Activated B cell treated with CpG ODN at 0.5 μM for 24 hours (primary cell): ENCODE measurements at regions of chr15 and their contacts with region 1.

Region 1: GRCh38 chr15:25508369-25509002 is 69.7 kb upstream of the UBE3A start:
- DNase-seq: no peak
- ATAC-seq: no peak
- H3K4me3 Mint-ChIP-seq: no peak overlapping the region
- H3K27ac Mint-ChIP-seq: no peak overlapping the region
- H3K4me1 Mint-ChIP-seq: no peaks in the 10 kb centered on the region
- H3K27me3 Mint-ChIP-seq: no peaks in the 10 kb centered on the region
- CTCF ChIP-seq: no peak

Region 2: DNA sequence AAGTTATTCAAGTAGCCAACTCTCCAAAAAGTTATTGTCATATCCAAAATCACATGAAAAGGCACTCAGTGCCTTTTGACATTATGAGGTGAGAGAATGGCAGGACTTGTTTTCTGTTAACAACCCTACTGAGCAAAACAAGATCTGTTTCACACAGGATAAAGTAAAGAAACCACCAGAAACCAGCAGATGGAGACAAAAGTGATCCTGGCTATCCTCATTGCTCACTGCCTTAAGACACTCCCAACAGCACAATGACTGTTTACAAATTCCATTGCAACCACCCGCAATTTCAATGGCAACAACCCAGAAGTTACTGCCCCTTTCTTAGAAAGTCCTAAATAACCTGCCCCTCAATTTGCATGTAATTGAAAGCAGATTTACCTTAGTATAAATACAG is 1468.8 kb before region 1 on chr15:
- CTCF ChIA-PET with region 1: no interaction called
- POLR2A ChIA-PET with region 1: no interaction called
- intact Hi-C with region 1: loop called (anchors 10 kb)
- DNase-seq: no peak
- ATAC-seq: no peak
- H3K4me3 Mint-ChIP-seq: no peak overlapping the region
- H3K27ac Mint-ChIP-seq: no peak overlapping the region
- H3K4me1 Mint-ChIP-seq: no peaks in the 10 kb centered on the region
- H3K27me3 Mint-ChIP-seq: no peaks in the 10 kb centered on the region
- CTCF ChIP-seq: no peak

Region 3: DNA sequence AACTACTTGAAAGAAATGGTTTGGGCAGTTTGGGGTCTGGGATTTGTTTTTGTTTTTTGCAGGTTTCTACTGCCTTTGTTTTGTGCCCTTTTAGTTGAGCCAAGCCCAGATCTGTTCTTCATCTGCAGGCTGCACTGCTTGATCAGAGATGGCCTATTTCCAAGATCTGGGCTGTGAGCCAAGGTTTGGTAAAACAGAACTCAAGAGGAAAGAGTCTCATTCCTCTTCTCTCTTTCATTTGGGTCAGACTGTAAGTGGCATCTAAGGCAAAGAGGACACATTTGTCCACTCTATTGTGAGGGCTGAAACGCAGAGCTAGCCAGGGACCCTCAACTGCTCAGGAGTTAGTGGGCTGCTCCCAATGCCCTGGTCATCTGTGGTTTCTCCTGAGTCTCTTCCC is 34.7 kb after region 1 on chr15:
- CTCF ChIA-PET with region 1: no interaction called
- POLR2A ChIA-PET with region 1: no interaction called
- intact Hi-C with region 1: no loop called
- DNase-seq: no peak
- ATAC-seq: no peak
- H3K4me3 Mint-ChIP-seq: no peak overlapping the region
- H3K27ac Mint-ChIP-seq: no peak overlapping the region
- H3K4me1 Mint-ChIP-seq: no peaks in the 10 kb centered on the region
- H3K27me3 Mint-ChIP-seq: no peaks in the 10 kb centered on the region
- CTCF ChIP-seq: no peak

Region 4: GRCh38 chr15:26260517-26261133 is 752.1 kb after region 1 on chr15:
- CTCF ChIA-PET with region 1: interaction called, 16 read pairs
- POLR2A ChIA-PET with region 1: no interaction called
- intact Hi-C with region 1: loop called (anchors 1 kb)
- DNase-seq: no peak
- ATAC-seq: no peak
- H3K4me3 Mint-ChIP-seq: no peak overlapping the region
- H3K27ac Mint-ChIP-seq: no peak overlapping the region
- H3K4me1 Mint-ChIP-seq: no peaks in the 10 kb centered on the region
- H3K27me3 Mint-ChIP-seq: no peaks in the 10 kb centered on the region
- CTCF ChIP-seq: peak; percentile 34